ENCODE measurements at regions of chr19 and their contacts with region 1.

Region 1: DNA sequence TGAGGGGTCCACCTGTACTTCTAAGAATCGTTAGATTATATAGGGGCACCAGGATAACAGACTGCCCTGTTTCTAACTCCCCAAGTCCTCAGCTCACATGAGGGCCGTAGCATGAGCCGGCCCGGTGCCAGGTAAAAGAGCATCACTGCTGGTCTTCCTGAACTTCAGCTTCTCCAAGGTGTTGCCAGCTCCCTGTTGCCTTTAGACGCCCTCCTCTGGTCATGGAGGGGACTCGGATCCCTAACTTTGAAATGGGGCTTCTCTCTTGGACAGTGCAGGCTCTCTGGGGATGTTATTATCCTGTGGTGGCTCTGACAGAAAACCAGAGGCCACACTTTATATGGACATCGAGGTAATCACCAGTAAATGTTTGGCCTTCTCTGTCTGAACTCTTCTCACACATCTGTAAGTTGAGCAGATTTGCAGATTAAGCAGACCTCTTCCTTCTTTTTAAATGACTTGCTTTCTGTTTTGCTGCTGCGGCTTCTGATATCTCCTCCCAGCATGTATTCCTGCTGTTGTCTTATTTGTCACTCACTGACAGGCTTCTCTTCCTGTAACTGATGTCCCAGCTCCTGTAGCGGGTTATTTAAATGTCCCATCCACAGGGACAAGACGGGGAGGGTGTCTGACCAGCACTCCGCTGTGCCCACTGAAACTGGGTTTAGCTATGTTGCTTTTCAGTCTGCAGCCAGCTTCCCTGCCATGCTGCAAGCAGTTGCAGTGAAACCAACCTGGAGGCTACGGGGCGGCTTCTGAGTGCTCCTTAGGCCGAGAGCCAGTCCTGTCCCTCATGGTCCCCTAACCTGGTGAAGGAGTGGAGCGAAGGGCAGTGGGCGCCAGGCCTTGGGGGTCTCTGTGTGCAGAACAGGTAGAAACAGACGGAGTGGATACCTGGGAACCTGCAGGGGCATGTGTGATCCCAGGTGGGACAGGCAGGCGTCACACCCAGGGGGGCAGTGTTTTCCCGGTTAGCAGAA is 39.2 kb downstream of the TSSK6 start:
- DNase-seq: peak in 1 of 10 donors; percentile 86

Region 2: GRCh38 chr19:19420570-19421298 is 55.4 kb before region 1 on chr19:
- intact Hi-C with region 1: loop called (anchors 10 kb)
- DNase-seq: peak in 2 of 10 donors; percentile 25 to 53